Activated CD4-positive, alpha-beta memory T cell treated with anti-CD3 and anti-CD28 coated beads for 36 hours (primary cell): ENCODE measurements at regions of chr1 and their contacts with region 1.

Region 1: GRCh38 chr1:110963691-110964399 is at the start of gene LRIF1:
- DNase-seq: peak; percentile 100
- H3K4me3 Mint-ChIP-seq: peak within 1 kb of the TSS; percentile 84
- H3K27ac Mint-ChIP-seq: peak within 1 kb of the TSS; percentile 96
- H3K4me1 Mint-ChIP-seq: peaks cover 32% of the 10 kb centered on the region
- H3K27me3 Mint-ChIP-seq: peaks cover 9% of the 10 kb centered on the region
- total RNA-seq, gene LRIF1: 12.9 to 14.4 TPM

Region 2: DNA sequence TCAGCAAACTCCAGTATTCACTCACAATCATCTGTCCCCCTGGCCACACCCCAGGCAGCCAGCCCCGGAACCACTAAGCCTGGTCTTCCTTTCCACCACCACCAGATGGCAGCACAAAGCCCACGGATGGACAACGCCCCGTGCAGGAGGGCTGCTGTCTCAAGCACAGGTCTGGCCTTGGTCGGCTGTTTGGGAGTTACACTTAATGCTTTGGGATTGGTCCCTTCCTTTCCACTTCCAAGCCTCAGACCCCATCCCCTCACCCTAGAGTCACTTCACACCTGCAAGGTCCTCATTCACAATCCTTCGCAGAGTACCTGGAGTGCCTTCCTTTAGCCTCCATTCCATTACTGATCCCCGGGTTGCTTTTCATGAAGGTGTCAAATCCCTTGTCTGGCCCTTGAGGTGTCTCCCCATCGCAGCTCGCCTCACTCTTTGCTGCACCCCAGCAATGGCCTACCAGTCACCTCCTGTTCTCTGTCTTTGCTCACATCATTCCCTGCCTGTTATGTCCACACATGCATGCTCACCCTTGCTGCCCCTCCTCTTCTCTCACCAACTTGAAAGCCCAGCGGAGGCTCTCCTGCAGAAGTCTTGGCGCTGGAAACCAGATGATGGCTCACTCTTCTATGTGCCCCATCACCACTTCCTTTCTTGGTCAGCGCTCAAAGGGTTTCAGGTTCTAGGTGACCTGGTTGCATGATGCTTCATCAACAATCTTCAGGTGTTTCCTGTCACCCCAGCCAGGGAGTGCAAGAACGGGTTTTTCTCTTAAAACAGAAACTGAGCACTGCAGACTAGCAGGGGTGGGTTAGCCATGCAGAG is 332.8 kb before region 1 on chr1:
- CTCF ChIA-PET with region 1: interaction called, 3 read pairs
- POLR2A ChIA-PET with region 1: no interaction called
- intact Hi-C with region 1: loop called (anchors 10 kb)
- DNase-seq: peak; percentile 92
- H3K4me3 Mint-ChIP-seq: no peak overlapping the region
- H3K27ac Mint-ChIP-seq: no peak overlapping the region
- H3K4me1 Mint-ChIP-seq: peaks cover 66% of the 10 kb centered on the region
- H3K27me3 Mint-ChIP-seq: no peaks in the 10 kb centered on the region

Region 3: DNA sequence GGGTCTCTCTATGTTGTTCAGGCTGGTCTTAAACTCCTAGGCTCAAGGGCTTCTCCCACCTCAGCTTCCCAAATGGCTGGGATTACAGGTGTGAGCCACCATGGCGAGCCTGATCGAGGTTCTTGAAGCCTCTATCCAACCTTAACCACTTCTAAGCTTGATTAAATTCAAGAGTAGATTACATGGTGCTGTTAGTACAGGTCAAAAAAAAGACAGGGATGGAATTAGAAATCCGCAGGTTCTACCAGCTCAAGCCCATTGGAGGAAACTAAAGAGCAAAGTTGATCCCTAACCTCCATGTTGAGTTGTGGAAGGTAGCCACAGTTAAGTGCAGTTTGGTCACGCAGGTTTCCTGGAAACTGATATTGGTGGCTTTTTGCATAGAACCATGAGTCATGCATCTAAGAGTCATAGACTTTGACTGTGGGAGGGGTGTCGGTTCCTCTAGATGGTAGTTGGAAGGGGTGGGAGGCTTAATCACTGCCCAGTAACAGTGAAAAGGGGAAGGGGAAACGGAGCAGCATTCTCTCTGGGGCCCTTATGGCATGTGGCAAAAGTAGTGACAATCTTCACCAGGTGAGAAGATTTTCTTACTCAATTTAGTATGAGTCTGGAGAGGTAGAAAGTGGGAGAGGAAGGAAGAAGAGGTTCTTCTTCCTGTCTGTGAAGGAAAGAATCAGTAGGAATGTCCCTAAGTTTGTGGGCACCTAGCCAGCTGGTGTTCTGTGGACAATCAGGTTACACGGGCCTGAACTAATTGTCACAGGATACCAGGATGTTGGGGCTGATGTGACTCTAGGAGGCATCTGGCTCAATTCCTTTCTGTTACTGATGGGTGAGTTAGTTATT is 83.9 kb before region 1 on chr1:
- CTCF ChIA-PET with region 1: interaction called, 14 read pairs
- POLR2A ChIA-PET with region 1: interaction called, 15 read pairs
- intact Hi-C with region 1: loop called (anchors 1 kb)
- DNase-seq: peak; percentile 80
- H3K4me3 Mint-ChIP-seq: peak overlapping the region; percentile 69
- H3K27ac Mint-ChIP-seq: peak overlapping the region; percentile 99
- H3K4me1 Mint-ChIP-seq: peaks cover 62% of the 10 kb centered on the region
- H3K27me3 Mint-ChIP-seq: no peaks in the 10 kb centered on the region

Region 4: DNA sequence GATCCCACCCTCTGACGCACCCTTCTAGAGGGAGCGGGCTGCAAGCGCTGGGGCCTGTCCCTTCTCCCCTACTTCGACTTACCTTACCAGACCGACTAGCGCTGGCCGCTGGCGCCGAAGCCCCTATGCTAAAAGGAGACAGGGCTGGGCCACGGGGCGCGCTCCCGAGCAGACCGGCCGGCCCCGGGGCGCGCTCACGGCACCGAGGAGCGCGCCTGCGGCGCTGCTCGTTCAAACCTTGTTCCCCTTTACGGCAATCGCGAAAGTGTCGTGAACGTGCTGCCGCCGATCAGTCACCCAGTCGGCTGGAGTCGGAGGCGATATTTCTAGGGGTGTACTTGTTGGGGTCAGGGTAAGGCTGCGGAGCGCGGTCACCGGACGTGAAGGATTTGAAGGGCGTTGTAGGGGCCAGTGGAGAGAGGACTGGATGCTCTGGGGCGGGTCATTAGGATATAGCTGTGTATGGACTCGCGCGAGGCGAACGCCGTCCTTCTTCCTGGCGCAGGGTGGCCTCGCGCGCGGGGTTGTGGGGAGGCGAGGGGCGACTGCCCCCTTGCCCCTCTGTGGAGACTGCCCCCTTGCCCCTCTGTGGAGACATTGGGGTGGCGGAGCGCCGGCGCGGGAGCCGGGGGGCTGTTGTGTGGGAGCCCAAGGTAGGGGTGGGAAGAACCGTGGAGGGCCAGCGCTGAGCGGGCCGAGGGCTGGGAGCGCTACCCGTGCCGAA is 176.3 kb after region 1 on chr1 and contains the starts of genes CEPT1 and DRAM2:
- CTCF ChIA-PET with region 1: no interaction called
- POLR2A ChIA-PET with region 1: no interaction called
- intact Hi-C with region 1: loop called (anchors 2 kb)
- DNase-seq: peak; percentile 95
- H3K4me3 Mint-ChIP-seq: peak within 1 kb of the TSS; percentile 92
- H3K27ac Mint-ChIP-seq: peak within 1 kb of the TSS; percentile 88
- H3K4me1 Mint-ChIP-seq: peaks cover 34% of the 10 kb centered on the region
- H3K27me3 Mint-ChIP-seq: no peaks in the 10 kb centered on the region
- total RNA-seq, gene CEPT1: 23.9 to 28.8 TPM
- total RNA-seq, gene DRAM2: 30.1 to 30.5 TPM

Region 5: DNA sequence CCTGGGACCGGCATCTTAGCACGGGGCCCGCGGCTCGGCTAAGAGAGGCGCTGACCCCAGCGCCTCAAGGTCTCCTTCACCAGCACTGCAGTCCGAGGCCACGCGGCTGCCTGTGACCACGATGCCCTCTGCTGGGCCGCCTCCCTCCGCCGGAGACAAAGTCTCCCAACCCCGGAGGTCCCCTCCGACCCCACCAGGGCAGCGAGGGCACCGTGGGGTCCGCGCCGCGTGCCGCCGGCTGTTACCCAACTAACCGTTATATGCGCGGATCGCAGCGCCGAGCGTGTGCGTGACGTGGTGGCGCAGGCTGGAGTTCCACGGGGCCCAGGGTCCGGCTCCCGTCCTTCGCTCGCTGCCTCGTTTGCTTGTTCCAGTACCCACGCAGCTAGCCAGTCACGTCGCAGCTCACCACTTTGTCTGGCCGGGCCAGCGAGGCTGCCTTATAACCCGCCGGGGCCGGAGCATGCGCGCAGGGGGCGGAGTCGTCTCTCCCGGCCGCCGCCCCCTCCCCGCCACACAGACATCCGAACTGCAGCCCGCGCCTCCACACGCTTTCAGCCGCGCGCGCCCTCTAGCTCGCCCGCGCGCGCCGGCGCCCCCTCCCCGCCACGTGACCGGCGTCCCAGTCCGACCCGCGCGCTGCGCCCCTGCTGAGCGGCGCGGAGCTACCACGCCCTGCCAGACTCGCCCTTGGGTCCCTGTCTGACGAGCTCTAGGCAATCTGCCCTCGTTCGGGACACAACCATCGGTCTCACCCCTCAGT is 1992.1 kb after region 1 on chr1 and contains the start of gene SLC16A1:
- CTCF ChIA-PET with region 1: no interaction called
- POLR2A ChIA-PET with region 1: no interaction called
- intact Hi-C with region 1: loop called (anchors 10 kb)
- DNase-seq: peak; percentile 92
- H3K4me3 Mint-ChIP-seq: peak within 1 kb of the TSS; percentile 98
- H3K27ac Mint-ChIP-seq: peak within 1 kb of the TSS; percentile 97
- H3K4me1 Mint-ChIP-seq: peaks cover 58% of the 10 kb centered on the region
- H3K27me3 Mint-ChIP-seq: no peaks in the 10 kb centered on the region
- total RNA-seq, gene SLC16A1: 48.7 to 53.3 TPM